ENCODE measurements at regions of chr17 and their contacts with region 1.

Region 1: DNA sequence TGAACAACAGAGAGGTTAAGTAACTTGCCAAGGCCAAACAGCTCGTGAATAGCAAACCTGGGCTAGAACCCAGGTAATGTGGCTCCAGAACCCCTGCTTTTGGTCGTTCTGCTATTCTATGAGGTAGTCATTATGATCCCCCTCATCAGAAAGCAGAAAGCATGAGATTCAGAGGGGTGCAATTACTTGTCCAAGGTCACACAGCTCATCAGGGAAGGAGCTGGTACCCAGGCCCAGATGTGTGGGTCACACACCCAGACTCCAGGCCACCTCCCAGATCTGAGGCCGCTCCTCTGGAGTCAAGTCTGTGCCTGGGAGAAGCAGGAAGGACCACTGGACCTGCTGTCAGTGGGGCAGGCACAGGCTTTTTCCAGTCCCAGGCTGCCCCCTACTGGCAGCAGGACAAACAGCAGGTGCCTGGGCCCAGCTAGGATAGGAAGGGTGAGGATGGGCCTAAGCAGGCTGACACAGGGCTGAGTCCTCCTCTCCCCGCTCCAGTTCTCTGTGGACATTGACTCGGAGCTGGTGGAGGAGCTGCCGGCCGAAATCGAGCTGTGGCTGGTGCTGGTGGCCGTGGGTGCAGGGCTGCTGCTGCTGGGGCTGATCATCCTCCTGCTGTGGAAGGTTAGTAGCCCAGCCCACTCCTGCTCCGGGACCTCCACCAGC is 7.8 kb upstream of the PDK2 start:
- DNase-seq: peak; percentile 80
- ATAC-seq: peak; percentile 92
- H3K4me3 ChIP-seq: no peak overlapping the region
- H3K4me3 Mint-ChIP-seq: no peak overlapping the region
- H3K27ac ChIP-seq: no peak overlapping the region
- H3K27ac Mint-ChIP-seq: no peak overlapping the region
- H3K4me1 ChIP-seq: no peaks in the 10 kb centered on the region
- H3K4me1 Mint-ChIP-seq: no peaks in the 10 kb centered on the region
- H3K27me3 ChIP-seq: peaks cover 0 to 3% (median 0%) of the 10 kb centered on the region in 4 experiments
- H3K27me3 Mint-ChIP-seq: no peaks in the 10 kb centered on the region
- CTCF ChIP-seq: peak; percentile 94

Region 2: DNA sequence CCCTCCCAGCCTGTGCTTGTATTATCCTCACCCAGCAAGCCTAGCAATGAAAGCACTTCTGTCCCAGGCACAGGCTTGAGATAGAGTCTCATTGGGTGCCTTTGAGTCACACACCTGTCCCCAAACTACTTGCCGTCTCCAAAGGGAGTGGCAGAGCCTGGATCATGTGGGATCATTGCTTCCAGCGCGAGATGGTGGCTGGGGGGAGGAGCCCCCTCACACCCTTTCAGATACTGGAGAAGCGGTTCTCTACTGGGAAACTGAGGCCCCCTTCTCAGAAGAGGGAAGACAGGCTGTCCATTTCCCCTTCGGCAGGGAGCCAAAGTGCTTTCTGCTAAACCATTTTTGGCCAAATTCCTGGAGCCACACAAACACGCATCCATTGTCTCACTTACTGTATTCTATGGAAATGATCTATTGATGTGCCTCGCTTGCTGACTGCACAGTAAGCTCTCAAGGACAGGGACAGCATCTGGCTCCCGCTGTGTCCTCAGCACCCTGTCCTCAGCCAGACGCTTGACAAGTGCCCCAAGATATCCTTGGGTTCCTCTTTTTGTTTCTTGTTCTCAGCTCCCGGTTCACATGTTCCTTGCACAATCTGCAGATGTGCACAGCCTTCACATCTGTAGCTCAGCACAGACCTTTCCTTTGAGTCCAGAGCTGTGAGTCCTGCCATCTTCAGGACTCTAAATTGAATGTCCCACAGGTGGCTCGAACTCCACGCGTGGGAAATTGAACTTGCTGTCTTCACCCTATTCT is 66.4 kb before region 1 on chr17:
- CTCF ChIA-PET with region 1: interaction called, 68 read pairs
- POLR2A ChIA-PET with region 1: no interaction called
- intact Hi-C with region 1: no loop called
- DNase-seq: no peak
- ATAC-seq: no peak
- H3K4me3 ChIP-seq: no peak overlapping the region
- H3K4me3 Mint-ChIP-seq: no peak overlapping the region
- H3K27ac ChIP-seq: no peak overlapping the region
- H3K27ac Mint-ChIP-seq: no peak overlapping the region
- H3K4me1 ChIP-seq: no peaks in the 10 kb centered on the region
- H3K4me1 Mint-ChIP-seq: no peaks in the 10 kb centered on the region
- H3K27me3 ChIP-seq: peaks cover 0 to 9% (median 2%) of the 10 kb centered on the region in 4 experiments
- H3K27me3 Mint-ChIP-seq: peaks cover 32% of the 10 kb centered on the region
- CTCF ChIP-seq: no peak

Region 3: DNA sequence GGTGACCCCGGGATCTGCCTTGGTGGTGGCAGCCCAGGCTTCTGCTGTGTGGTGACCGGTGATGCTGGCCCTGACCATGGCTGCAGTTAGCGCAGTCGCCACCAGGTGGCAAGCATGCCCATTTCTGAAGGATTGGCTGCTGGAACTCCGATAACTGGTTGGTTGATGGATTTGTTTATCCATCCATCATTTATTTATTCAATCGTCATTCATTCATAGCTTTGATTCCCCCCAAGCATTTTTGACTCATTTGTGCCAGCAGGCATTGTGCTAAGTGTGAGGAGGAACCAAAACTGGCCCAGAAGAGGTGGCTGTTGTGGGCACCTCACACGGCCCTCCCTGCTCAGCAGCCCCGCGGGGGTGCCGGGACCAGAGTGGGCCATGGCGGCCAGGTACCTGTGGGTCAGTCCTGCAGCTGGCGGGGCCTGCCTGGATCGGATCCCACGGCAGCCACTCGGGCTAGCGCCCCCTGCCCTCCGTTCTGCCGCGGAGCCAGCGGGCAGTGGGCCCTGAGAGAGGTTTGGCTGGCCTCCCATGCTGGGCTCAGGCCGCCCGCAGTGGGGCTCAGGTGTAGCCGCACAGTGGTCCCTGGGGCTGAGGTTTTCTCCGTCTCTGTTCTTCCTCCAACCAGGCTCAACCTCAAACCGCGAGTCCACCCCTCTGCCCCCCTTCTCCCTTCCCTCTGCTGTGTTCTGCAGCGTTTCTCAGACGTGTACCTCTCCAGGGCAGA is 60.3 kb before region 1 on chr17:
- CTCF ChIA-PET with region 1: interaction called, 68 read pairs
- POLR2A ChIA-PET with region 1: interaction called, 7 read pairs
- intact Hi-C with region 1: loop called (anchors 1 kb)
- DNase-seq: peak; percentile 77
- ATAC-seq: peak; percentile 88
- H3K4me3 ChIP-seq: peak overlapping the region in 1 of 5 experiments; percentile 15
- H3K4me3 Mint-ChIP-seq: peak overlapping the region; percentile 59
- H3K27ac ChIP-seq: no peak overlapping the region
- H3K27ac Mint-ChIP-seq: peak overlapping the region; percentile 71
- H3K4me1 ChIP-seq: peaks cover 10 to 13% of the 10 kb centered on the region in 2 donors
- H3K4me1 Mint-ChIP-seq: peaks cover 11% of the 10 kb centered on the region
- H3K27me3 ChIP-seq: peaks cover 0 to 31% (median 13%) of the 10 kb centered on the region in 4 experiments
- H3K27me3 Mint-ChIP-seq: peaks cover 38% of the 10 kb centered on the region
- CTCF ChIP-seq: peak; percentile 91

Region 4: GRCh38 chr17:50055426-50056230 is 31.8 kb before region 1 on chr17 and contains the start of gene ITGA3:
- CTCF ChIA-PET with region 1: interaction called, 13 read pairs
- POLR2A ChIA-PET with region 1: no interaction called
- intact Hi-C with region 1: no loop called
- DNase-seq: peak; percentile 62
- ATAC-seq: peak; percentile 56
- H3K4me3 ChIP-seq: peak within 1 kb of the TSS; percentile 40 to 80 (median 64)
- H3K4me3 Mint-ChIP-seq: peak within 1 kb of the TSS; percentile 92
- H3K27ac ChIP-seq: no peak within 1 kb of the TSS
- H3K27ac Mint-ChIP-seq: peak within 1 kb of the TSS; percentile 75
- H3K4me1 ChIP-seq: peaks cover 11 to 20% of the 10 kb centered on the region in 2 donors
- H3K4me1 Mint-ChIP-seq: peaks cover 22% of the 10 kb centered on the region
- H3K27me3 ChIP-seq: peaks cover 0 to 42% (median 3%) of the 10 kb centered on the region in 4 experiments
- H3K27me3 Mint-ChIP-seq: peaks cover 17% of the 10 kb centered on the region
- CTCF ChIP-seq: no peak
- total RNA-seq, gene ITGA3: 11.9 and 13.0 TPM in 2 replicates

Region 5: GRCh38 chr17:50067996-50068395 is 19.4 kb before region 1 on chr17:
- CTCF ChIA-PET with region 1: interaction called, 10 read pairs
- POLR2A ChIA-PET with region 1: no interaction called
- intact Hi-C with region 1: no loop called
- DNase-seq: no peak
- ATAC-seq: no peak
- H3K4me3 ChIP-seq: no peak overlapping the region
- H3K4me3 Mint-ChIP-seq: no peak overlapping the region
- H3K27ac ChIP-seq: no peak overlapping the region
- H3K27ac Mint-ChIP-seq: no peak overlapping the region
- H3K4me1 ChIP-seq: no peaks in the 10 kb centered on the region
- H3K4me1 Mint-ChIP-seq: no peaks in the 10 kb centered on the region
- H3K27me3 ChIP-seq: peaks cover 0 to 8% (median 0%) of the 10 kb centered on the region in 4 experiments
- H3K27me3 Mint-ChIP-seq: peaks cover 4% of the 10 kb centered on the region
- CTCF ChIP-seq: no peak

Region 6: GRCh38 chr17:50100480-50100883 is 13.1 kb after region 1 on chr17:
- CTCF ChIA-PET with region 1: interaction called, 11 read pairs
- POLR2A ChIA-PET with region 1: no interaction called
- intact Hi-C with region 1: no loop called
- DNase-seq: no peak
- ATAC-seq: no peak
- H3K4me3 ChIP-seq: no peak overlapping the region
- H3K4me3 Mint-ChIP-seq: no peak overlapping the region
- H3K27ac ChIP-seq: no peak overlapping the region
- H3K27ac Mint-ChIP-seq: no peak overlapping the region
- H3K4me1 ChIP-seq: peaks cover 8 to 16% of the 10 kb centered on the region in 2 donors
- H3K4me1 Mint-ChIP-seq: peaks cover 14% of the 10 kb centered on the region
- H3K27me3 ChIP-seq: no peaks in the 10 kb centered on the region
- H3K27me3 Mint-ChIP-seq: no peaks in the 10 kb centered on the region
- CTCF ChIP-seq: no peak

Region 7: DNA sequence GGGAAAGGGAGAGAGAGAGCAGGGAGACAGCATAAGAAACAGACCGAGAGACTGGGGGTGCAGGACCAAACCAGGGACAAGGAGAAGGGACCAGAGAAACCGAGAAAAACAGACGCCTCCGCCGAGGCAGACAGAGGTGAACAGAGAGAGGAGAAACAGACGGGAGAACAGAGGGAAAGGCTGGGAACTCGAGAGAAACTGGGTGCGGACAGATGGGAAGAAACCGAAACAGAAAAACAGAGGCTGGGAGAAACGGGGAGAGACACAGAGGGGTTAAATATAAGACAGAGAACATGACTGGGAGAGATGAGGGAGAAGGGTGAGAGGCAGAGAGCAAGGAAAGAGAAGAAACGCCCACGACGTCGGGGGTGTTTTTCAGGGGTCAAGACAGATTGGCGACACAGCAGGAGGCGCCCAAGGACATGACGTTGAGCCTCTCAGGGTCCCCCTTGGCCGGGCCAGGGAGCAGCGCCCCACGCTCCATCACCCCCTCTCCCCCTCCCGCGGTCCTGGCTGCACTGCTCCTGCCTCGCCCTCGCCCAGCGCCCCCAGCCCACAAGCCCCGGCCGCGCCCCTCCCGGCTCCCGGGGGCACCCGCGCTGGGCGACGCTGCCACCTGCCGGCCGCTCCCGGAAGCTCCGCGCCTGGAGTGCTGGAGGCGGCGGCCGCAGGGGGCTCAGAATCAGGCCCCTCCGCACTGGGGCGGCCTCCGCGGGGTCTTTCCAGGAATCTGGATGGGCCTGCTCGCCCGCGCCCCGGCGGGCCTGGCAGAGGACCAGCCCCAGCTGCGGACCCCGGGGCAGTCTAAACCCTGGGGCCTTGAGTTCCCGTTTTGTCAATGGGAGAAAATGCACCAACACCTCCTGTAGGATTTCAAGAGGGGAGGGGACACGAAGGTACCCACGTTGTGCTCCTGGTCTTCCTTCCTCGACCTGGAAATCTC is 185.6 kb after region 1 on chr17:
- CTCF ChIA-PET with region 1: no interaction called
- POLR2A ChIA-PET with region 1: no interaction called
- intact Hi-C with region 1: no loop called
- DNase-seq: peak; percentile 66
- ATAC-seq: peak; percentile 79
- H3K4me3 ChIP-seq: peak overlapping the region in 4 of 5 experiments; percentile 26 to 49 (median 32)
- H3K4me3 Mint-ChIP-seq: peak overlapping the region; percentile 85
- H3K27ac ChIP-seq: no peak overlapping the region
- H3K27ac Mint-ChIP-seq: no peak overlapping the region
- H3K4me1 ChIP-seq: peaks cover 7 to 8% of the 10 kb centered on the region in 2 donors
- H3K4me1 Mint-ChIP-seq: peaks cover 11% of the 10 kb centered on the region
- H3K27me3 ChIP-seq: peaks cover 0 to 52% (median 14%) of the 10 kb centered on the region in 4 experiments
- H3K27me3 Mint-ChIP-seq: peaks cover 39% of the 10 kb centered on the region
- CTCF ChIP-seq: peak; percentile 95

Measured in B cell (primary cell).